MCF 10A (cell line): ENCODE measurements at regions of chrX and their contacts with region 1.

Region 1: GRCh38 chrX:15930585-15930984 is 76.0 kb upstream of the AP1S2 start:
- DNase-seq: peak; percentile 54
- H3K4me3 Mint-ChIP-seq: no peak overlapping the region
- H3K27ac Mint-ChIP-seq: no peak overlapping the region
- H3K4me1 Mint-ChIP-seq: no peaks in the 10 kb centered on the region
- H3K27me3 Mint-ChIP-seq: peaks cover 81% of the 10 kb centered on the region
- CTCF ChIP-seq: peak; percentile 41

Region 2: DNA sequence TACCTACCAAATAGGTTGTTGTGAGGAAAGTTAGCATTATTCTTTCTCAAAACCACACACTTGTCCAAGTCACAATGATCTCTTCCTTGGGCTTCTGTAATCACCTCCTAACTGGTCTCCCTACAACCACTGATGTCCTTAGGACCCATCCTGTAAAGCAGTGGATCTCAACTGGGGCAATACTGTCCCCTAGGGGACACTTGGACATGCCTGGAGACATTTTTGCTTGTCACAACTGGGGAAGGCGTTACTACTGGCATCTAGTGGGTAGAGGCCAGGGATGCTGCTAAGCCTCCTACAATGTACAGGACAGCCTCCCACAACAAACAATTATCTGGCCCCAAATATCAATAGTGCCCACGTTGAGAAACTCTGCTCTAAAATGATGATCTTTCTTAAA is 42.7 kb after region 1 on chrX:
- CTCF ChIA-PET with region 1: interaction called, 8 read pairs
- POLR2A ChIA-PET with region 1: no interaction called
- intact Hi-C with region 1: loop called (anchors 1 kb)
- DNase-seq: peak; percentile 75
- H3K4me3 Mint-ChIP-seq: no peak overlapping the region
- H3K27ac Mint-ChIP-seq: no peak overlapping the region
- H3K4me1 Mint-ChIP-seq: no peaks in the 10 kb centered on the region
- H3K27me3 Mint-ChIP-seq: peaks cover 59% of the 10 kb centered on the region
- CTCF ChIP-seq: peak; percentile 29

Region 3: DNA sequence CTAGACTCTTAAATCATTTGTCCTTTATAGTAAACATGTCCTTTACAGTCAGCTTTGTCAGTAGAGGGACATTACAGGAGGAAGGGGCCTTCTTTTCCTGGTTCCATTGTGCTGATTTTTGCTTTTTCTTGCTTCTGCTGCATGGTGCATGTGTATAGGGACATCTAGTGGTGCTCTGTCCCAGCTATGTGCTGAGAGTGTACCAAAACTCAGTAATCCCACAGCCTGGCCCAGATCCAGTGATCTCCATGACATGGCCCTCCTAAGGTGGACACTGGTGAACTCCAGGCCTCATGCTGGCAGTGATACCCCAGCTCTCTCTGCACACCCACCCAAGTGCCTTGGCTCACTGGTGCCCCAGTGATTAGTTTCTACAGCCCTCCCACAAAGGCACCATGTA is 281.9 kb after region 1 on chrX:
- CTCF ChIA-PET with region 1: no interaction called
- POLR2A ChIA-PET with region 1: no interaction called
- intact Hi-C with region 1: loop called (anchors 10 kb)
- DNase-seq: peak; percentile 25
- H3K4me3 Mint-ChIP-seq: no peak overlapping the region
- H3K27ac Mint-ChIP-seq: no peak overlapping the region
- H3K4me1 Mint-ChIP-seq: peaks cover 5% of the 10 kb centered on the region
- H3K27me3 Mint-ChIP-seq: peaks cover 13% of the 10 kb centered on the region
- CTCF ChIP-seq: peak; percentile 34

Region 4: DNA sequence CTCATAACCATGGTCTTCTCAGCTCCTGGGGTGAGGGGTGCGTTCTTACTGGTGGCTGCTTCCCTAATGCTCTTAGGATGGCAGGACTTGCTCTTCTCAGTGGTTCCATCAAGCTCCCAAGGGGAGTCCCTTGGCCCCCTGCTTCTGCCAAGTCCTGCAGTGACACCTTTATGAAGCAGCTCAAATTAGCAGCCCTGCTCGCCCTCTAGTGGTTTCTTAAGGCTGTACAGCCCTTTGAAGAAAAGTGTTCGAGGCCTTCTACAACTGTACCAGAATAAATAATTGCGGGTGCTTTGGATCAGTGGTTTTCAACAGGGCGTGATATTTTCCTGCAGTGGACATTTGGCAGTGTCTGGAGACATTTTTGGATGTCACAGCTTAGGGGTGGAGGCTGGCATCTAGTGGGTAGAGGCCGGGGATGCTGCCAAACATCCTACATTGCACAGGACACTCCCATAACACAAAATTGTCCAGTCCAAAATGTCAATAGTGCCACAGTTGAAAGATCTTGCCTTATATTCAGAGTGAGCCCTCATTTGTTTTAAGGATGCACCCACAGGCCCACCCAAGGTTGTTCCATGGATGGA is 514.7 kb after region 1 on chrX:
- CTCF ChIA-PET with region 1: interaction called, 7 read pairs
- POLR2A ChIA-PET with region 1: no interaction called
- intact Hi-C with region 1: loop called (anchors 10 kb)
- DNase-seq: peak; percentile 70
- H3K4me3 Mint-ChIP-seq: no peak overlapping the region
- H3K27ac Mint-ChIP-seq: no peak overlapping the region
- H3K4me1 Mint-ChIP-seq: no peaks in the 10 kb centered on the region
- H3K27me3 Mint-ChIP-seq: peaks cover 45% of the 10 kb centered on the region
- CTCF ChIP-seq: peak; percentile 84

Region 5: GRCh38 chrX:16670998-16671397 is 740.4 kb after region 1 on chrX:
- CTCF ChIA-PET with region 1: interaction called, 3 read pairs
- POLR2A ChIA-PET with region 1: no interaction called
- intact Hi-C with region 1: loop called (anchors 1 kb)
- DNase-seq: peak; percentile 57
- H3K4me3 Mint-ChIP-seq: no peak overlapping the region
- H3K27ac Mint-ChIP-seq: no peak overlapping the region
- H3K4me1 Mint-ChIP-seq: no peaks in the 10 kb centered on the region
- H3K27me3 Mint-ChIP-seq: peaks cover 23% of the 10 kb centered on the region
- CTCF ChIP-seq: peak; percentile 45

Region 6: DNA sequence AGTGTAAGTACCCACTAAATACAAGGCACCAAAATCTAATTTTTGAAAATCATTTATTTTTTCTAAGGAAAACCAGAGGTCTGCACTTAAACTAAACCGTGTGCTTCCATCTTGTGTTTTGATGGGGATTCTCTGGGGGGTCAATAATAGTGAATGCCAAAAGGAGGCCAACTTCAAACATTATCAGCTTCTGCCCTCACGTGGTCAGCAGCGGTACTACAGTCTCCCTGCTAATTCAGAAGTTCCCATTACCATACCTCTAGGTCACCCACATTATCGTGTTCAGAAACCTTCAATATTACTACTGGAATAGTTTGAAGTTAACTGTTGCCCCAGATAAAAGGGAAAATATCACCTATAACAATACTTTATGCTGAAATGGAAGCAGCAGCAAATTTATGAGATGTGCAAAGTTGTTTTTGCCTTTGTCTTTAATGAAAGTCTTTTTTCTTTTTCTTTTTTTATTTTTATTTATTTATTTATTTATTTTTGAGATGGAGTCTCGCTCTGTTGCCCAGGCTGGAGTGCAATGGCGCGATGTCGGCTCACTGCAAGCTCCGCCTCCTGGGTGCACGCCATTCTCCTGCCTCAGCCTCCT is 764.6 kb after region 1 on chrX:
- CTCF ChIA-PET with region 1: interaction called, 3 read pairs
- POLR2A ChIA-PET with region 1: no interaction called
- intact Hi-C with region 1: loop called (anchors 1 kb)
- DNase-seq: peak; percentile 68
- H3K4me3 Mint-ChIP-seq: no peak overlapping the region
- H3K27ac Mint-ChIP-seq: no peak overlapping the region
- H3K4me1 Mint-ChIP-seq: no peaks in the 10 kb centered on the region
- H3K27me3 Mint-ChIP-seq: peaks cover 47% of the 10 kb centered on the region
- CTCF ChIP-seq: peak; percentile 80